ENCODE measurements at regions of chr3 and their contacts with region 1.

Region 1: GRCh38 chr3:142828703-142829305 is 60.1 kb downstream of the PCOLCE2 start:
- DNase-seq: peak; percentile 79
- ATAC-seq: peak; percentile 95

Region 2: GRCh38 chr3:142586803-142587406 is 241.9 kb before region 1 on chr3:
- intact Hi-C with region 1: loop called (anchors 10 kb)
- DNase-seq: no peak
- ATAC-seq: peak; percentile 44

Region 3: DNA sequence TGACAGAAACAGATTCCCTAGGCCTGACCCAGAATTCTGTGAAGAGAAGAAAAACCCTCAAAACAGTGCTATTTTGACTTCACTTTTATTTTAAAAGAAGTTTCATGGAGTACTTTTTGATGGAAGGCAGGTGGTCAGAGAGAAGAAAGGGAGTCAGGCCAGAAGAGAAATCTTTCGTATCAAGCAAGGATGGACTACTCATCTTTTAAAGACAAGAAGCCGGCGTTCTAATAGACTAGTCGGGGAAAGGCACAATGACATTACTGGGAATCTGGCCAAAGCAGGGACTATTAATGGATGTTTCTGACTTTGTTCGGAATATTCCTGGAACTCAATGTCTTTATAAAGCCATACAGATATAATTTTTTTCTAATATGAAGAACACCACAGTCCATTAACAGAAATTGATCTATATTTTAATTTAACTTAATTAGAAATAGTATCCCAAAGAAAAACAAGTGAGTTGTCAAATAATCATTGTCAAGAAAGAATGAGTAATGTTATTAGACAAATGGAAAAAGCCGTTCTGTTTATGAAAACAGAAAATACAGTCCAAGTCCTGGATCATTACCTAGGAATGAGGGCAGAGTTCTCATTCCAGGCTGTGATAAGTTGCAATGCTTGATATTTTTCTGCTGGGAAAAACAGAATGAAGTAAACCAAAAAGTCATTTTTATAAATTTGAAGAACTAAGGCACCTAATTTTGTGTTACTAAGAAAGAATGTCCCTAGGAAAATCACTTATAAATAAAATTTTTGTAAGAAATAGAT is 83.8 kb after region 1 on chr3:
- intact Hi-C with region 1: loop called (anchors 5 kb)
- DNase-seq: no peak
- ATAC-seq: peak; percentile 58

Region 4: DNA sequence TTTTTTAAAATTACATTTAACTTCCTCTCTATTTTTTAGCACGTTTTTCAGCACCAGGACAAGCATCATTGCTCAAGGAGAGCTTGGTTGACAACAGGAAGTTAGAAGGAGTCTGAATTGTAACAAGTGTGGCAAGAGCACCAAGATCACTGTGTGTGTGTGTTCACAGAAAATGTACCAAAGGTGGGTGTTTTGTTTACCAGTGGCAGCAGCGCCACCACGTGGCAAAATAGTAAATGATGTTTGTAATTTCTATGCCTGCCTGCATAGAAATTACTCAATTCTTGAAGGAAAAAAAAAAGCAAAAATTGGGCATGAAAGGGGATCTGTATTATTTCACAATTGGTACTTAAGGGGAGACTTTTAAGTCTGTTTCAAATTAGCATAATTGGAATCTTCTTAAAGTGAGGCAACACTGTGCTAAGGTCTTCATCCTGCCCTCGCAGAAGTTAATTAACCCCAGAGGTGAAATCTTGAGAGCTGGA is 165.2 kb after region 1 on chr3:
- intact Hi-C with region 1: loop called (anchors 2 kb)
- DNase-seq: no peak
- ATAC-seq: peak; percentile 54